Activated CD8-positive, alpha-beta T cell treated with anti-CD3 and anti-CD28 coated beads for 36 hours (primary cell): ENCODE measurements at regions of chr1 and their contacts with region 1.

Region 1: GRCh38 chr1:225447650-225448089 is 19.8 kb upstream of the LBR start:
- DNase-seq: no peak
- ATAC-seq: no peak
- H3K4me3 Mint-ChIP-seq: no peak overlapping the region
- H3K27ac Mint-ChIP-seq: no peak overlapping the region
- H3K4me1 Mint-ChIP-seq: peaks cover 44% of the 10 kb centered on the region
- H3K27me3 Mint-ChIP-seq: no peaks in the 10 kb centered on the region
- CTCF ChIP-seq: no peak

Region 2: DNA sequence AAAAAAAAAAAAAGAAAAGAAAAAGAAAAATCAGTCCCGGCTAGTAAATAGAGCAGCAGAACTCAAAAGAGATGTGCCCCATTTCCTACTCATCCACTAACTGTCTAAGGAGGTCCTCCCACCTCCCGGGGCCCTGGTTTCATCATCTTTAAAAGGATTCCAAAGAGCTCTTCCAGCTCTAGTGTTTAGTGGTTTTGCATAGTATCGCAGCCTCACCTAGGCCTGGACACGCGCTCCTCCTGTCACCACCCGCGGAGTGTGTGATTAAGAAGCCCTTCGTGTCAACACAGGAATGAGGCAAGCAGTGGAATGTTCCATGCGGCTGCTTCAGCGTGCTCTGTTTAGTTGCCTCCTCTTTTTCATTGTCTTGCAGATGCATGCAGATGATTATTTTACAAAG is 68.8 kb before region 1 on chr1:
- CTCF ChIA-PET with region 1: no interaction called
- POLR2A ChIA-PET with region 1: no interaction called
- intact Hi-C with region 1: no loop called
- DNase-seq: no peak
- ATAC-seq: no peak
- H3K4me3 Mint-ChIP-seq: no peak overlapping the region
- H3K27ac Mint-ChIP-seq: no peak overlapping the region
- H3K4me1 Mint-ChIP-seq: no peaks in the 10 kb centered on the region
- H3K27me3 Mint-ChIP-seq: no peaks in the 10 kb centered on the region
- CTCF ChIP-seq: no peak

Region 3: DNA sequence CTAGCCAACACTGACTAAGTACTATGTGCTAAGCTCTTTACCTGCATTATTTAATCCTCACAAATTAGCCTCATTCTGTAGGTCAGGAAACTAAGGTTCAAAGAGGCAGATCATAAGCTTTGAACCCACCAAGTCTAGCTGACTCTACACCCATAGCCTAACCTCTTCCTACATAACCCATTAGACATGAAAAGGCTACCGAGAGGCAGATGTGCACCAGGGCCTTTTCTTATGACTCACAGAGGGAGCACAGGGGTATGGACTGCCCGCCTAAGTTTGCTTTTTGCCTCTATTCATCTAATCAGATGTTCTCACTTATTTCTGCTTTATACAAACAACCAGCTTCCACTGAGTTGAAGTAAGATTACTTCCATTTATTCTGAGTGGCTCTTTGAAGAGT is 51.3 kb before region 1 on chr1:
- CTCF ChIA-PET with region 1: no interaction called
- POLR2A ChIA-PET with region 1: no interaction called
- intact Hi-C with region 1: no loop called
- DNase-seq: no peak
- ATAC-seq: peak; percentile 66
- H3K4me3 Mint-ChIP-seq: no peak overlapping the region
- H3K27ac Mint-ChIP-seq: no peak overlapping the region
- H3K4me1 Mint-ChIP-seq: peaks cover 10% of the 10 kb centered on the region
- H3K27me3 Mint-ChIP-seq: no peaks in the 10 kb centered on the region
- CTCF ChIP-seq: no peak

Region 4: GRCh38 chr1:225460737-225461562 is 13.3 kb after region 1 on chr1:
- CTCF ChIA-PET with region 1: interaction called, 8 read pairs
- POLR2A ChIA-PET with region 1: interaction called, 17 read pairs
- intact Hi-C with region 1: no loop called
- DNase-seq: peak; percentile 83
- ATAC-seq: peak; percentile 94
- H3K4me3 Mint-ChIP-seq: no peak overlapping the region
- H3K27ac Mint-ChIP-seq: peak overlapping the region; percentile 53
- H3K4me1 Mint-ChIP-seq: peaks cover 35% of the 10 kb centered on the region
- H3K27me3 Mint-ChIP-seq: no peaks in the 10 kb centered on the region
- CTCF ChIP-seq: no peak

Region 5: DNA sequence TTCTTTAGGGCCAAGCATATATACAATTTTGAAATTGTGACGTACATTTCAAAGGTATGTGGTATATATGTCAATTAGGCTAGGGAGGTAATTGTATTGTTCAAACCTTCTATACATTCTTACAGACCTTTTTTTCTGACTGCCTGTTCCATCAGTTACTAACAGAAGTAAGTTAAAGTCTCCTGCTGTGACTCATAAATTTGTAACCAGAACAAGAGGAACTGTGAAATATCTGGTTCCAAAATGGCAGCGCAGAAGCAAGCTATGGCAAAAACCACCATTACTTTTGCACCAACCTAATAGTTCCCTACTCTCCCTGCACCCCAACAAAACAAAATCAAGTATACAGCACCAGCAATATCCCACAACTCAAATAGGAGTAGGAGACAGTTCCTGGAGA is 111.7 kb after region 1 on chr1:
- CTCF ChIA-PET with region 1: no interaction called
- POLR2A ChIA-PET with region 1: no interaction called
- intact Hi-C with region 1: no loop called
- DNase-seq: no peak
- ATAC-seq: no peak
- H3K4me3 Mint-ChIP-seq: no peak overlapping the region
- H3K27ac Mint-ChIP-seq: no peak overlapping the region
- H3K4me1 Mint-ChIP-seq: no peaks in the 10 kb centered on the region
- H3K27me3 Mint-ChIP-seq: peaks cover 3% of the 10 kb centered on the region
- CTCF ChIP-seq: no peak